Activated B cell treated with CpG ODN at 0.5 μM for 24 hours (primary cell): ENCODE measurements at regions of chr7 and their contacts with region 1.

Region 1: DNA sequence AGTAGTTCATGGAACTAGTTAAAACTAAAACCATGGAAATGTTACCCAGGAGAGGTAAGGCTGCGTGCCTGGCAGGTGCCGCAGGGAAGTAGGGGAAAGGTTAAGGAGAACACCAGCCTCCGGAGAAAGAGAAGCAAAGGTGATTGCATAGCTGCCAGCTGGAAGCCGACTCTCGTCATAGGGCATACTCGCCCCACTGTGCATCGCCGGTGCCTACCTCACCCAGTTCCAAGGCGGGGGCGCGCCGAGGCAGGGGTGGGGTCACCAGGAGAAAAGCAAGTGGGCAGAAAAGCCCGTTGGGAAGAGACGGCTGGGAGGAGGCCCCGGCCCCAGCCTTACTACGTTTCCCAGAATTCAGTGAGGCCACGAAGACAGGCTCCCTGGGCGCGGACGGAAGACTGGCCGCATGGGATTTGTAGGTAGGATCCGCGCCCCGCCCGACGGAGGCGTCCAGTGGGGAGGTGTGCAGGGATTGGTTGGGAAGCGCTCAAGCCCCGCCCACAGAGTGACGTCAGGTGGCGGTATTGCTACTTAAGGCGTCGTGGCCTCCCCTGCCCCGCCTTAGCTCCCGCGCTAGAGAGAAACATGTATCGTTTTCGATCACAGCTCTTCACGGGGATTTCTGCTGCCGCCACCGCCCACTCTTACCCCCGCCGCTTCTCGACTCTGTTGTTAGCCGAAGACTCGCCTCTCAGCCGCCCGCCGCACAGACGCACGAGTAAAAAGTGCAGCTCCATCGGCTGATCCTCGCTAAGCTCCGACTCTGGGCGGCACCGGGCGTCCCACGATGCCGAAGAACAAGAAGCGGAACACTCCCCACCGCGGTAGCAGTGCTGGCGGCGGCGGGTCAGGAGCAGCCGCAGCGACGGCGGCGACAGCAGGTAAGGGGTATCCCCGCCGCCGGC is at the start of gene IFRD1:
- DNase-seq: peak; percentile 99
- ATAC-seq: peak; percentile 81
- H3K4me3 Mint-ChIP-seq: peak within 1 kb of the TSS; percentile 99
- H3K27ac Mint-ChIP-seq: peak within 1 kb of the TSS; percentile 99
- H3K4me1 Mint-ChIP-seq: peaks cover 36% of the 10 kb centered on the region
- H3K27me3 Mint-ChIP-seq: no peaks in the 10 kb centered on the region
- CTCF ChIP-seq: no peak
- total RNA-seq, gene IFRD1: 58.7 and 67.0 TPM in 2 replicates

Region 2: DNA sequence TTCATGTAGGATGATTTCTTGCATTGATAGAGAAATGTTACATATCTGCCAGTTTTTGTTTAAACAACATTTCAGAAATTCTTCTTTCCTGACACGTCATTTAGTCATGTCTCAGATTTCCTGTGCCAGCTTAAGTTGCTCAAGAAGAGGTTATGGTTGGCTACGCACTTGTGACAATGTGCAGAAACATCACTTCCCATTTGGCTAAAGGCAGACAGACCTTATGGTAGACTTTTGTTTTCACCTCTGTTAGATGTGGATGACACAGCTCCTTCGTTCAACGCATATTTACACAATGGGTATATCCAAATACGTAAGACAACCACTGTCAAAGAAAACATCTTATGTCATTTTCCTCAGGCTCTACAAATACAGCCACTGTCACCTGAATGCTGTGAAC is 369.7 kb before region 1 on chr7:
- CTCF ChIA-PET with region 1: no interaction called
- POLR2A ChIA-PET with region 1: interaction called, 8 read pairs
- intact Hi-C with region 1: loop called (anchors 1 kb)
- DNase-seq: no peak
- ATAC-seq: peak; percentile 84
- H3K4me3 Mint-ChIP-seq: peak overlapping the region; percentile 33
- H3K27ac Mint-ChIP-seq: peak overlapping the region; percentile 33
- H3K4me1 Mint-ChIP-seq: peaks cover 48% of the 10 kb centered on the region
- H3K27me3 Mint-ChIP-seq: no peaks in the 10 kb centered on the region
- CTCF ChIP-seq: no peak

Region 3: GRCh38 chr7:112462236-112462635 is 12.1 kb after region 1 on chr7:
- CTCF ChIA-PET with region 1: interaction called, 4 read pairs
- POLR2A ChIA-PET with region 1: interaction called, 22 read pairs
- intact Hi-C with region 1: no loop called
- DNase-seq: no peak
- ATAC-seq: no peak
- H3K4me3 Mint-ChIP-seq: no peak overlapping the region
- H3K27ac Mint-ChIP-seq: no peak overlapping the region
- H3K4me1 Mint-ChIP-seq: no peaks in the 10 kb centered on the region
- H3K27me3 Mint-ChIP-seq: no peaks in the 10 kb centered on the region
- CTCF ChIP-seq: no peak

Region 4: DNA sequence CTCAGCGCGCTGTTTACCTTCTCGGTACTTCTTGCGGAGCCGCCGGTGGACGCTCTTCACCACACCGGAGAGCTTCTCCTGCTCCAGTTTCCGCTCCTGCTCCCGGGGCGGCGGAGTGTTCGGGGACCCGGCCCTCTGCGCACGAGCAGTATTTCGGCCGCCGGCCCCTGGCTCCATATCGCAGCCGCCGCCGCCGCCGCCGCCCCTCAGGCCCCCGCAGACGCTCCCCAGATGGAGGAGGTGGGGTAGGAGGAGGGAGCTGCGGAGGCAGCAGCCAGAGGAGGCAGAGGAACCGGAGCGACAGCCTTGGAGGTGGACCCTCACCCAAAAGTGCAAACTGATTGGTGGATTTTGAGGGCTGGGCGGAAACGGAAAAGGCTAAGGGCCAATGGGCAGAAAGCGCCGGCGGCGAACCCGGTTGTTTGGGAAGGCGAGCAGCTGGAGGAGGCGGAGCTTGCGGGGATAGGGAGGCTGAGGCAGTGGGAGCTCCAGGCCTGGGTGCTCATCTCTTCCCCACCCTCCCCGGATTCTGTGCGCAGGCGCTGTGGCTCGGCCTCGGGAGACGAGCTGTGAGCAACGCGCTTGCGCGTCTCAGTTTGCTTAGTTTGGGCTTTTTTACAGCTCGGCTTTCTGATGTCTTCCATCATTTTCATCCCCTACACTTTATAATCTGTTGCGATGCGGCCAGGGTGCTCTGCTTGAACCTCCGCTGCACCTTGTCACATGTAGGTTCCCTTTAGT is 489.6 kb after region 1 on chr7:
- CTCF ChIA-PET with region 1: no interaction called
- POLR2A ChIA-PET with region 1: interaction called, 8 read pairs
- intact Hi-C with region 1: loop called (anchors 1 kb)
- DNase-seq: peak; percentile 97
- ATAC-seq: peak; percentile 95
- H3K4me3 Mint-ChIP-seq: peak overlapping the region; percentile 99
- H3K27ac Mint-ChIP-seq: peak overlapping the region; percentile 97
- H3K4me1 Mint-ChIP-seq: peaks cover 46% of the 10 kb centered on the region
- H3K27me3 Mint-ChIP-seq: no peaks in the 10 kb centered on the region
- CTCF ChIP-seq: no peak